Activated CD4-positive, alpha-beta memory T cell treated with anti-CD3 and anti-CD28 coated beads for 36 hours (primary cell): ENCODE measurements at regions of chr17 and their contacts with region 1.

Region 1: DNA sequence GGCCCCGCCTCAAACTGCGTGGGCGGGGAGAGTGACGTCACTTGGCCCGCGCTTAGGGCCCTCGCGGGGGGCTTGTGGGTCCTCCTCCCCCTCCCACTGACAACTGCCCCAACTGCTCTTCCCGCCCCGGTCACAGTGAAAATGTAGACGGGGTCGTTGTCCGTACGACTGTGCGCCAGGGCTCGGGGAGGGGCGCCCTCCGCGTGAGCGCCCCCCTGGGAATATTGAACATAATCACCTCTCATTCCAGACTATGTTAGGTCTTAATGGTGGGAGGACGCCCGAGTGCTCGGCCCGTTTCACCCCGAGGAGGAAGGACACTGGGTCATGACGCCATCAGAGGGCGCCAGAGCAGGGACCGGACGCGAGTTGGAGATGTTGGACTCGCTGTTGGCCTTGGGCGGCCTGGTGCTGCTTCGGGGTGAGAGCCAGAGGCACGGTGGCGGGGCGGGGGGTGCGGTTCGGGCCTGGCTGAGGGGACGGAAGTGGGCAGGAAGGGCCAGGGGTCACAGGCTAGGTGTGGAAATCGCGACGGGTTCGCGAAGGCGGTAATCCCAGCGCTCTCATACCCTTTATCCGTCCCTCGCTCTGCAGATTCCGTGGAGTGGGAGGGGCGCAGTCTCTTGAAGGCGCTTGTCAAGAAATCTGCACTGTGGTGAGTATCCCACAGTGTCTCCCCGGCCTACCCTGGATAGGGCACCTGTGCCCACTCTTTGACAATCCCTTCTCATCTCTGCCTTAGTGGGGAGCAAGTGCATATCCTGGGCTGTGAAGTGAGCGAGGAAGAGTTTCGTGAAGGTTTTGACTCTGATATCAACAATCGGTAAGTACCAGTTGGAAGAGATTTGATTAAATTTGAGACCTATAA is at the start of gene ELP5:
- DNase-seq: peak; percentile 94
- H3K4me3 Mint-ChIP-seq: peak within 1 kb of the TSS; percentile 96
- H3K27ac Mint-ChIP-seq: peak within 1 kb of the TSS; percentile 100
- H3K4me1 Mint-ChIP-seq: peaks cover 40% of the 10 kb centered on the region
- H3K27me3 Mint-ChIP-seq: no peaks in the 10 kb centered on the region
- total RNA-seq, gene ELP5: 49.6 to 52.4 TPM

Region 2: DNA sequence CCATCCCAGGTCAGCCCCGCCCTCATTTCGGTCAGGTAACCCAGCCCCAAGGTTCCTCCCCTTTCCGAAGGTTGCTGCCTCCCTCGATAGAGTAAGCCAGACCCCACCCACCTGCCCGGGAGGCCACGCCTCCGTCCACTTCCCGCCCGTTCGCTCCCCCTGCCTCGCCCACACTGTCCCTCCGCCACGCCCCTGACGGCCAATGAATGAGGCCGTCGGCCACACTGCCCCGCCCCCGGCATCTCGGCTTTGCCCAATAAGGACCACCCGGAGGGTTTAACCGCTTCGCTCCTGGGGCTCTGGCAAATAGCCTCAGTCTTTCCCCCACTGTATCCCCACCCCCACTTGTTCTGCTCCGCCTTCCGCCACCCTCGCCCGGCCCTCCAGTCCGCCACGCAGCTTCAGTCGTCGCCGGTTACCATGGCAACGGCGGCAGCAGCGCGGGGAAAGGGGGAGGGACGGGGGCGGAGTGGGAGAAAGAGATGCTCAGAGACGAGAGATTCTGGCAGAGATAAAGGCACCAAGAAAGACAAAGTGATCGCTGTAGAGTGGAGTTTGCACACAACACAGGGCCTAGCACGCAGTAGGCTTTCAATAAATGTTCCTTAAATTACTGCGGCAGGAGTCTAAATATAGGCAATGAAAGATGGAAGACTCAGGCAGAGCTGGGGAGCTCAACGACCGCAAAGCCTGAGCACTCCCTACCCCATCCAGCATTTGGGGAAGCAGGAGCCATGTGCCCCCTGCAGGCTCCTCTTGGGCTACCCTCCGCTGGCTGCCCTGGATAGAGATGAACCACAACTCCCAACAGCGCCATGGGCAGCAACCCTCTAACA is 37.9 kb before region 1 on chr17:
- CTCF ChIA-PET with region 1: no interaction called
- POLR2A ChIA-PET with region 1: no interaction called
- intact Hi-C with region 1: loop called (anchors 1 kb)
- DNase-seq: peak; percentile 100
- H3K4me3 Mint-ChIP-seq: peak overlapping the region; percentile 85
- H3K27ac Mint-ChIP-seq: peak overlapping the region; percentile 89
- H3K4me1 Mint-ChIP-seq: peaks cover 52% of the 10 kb centered on the region
- H3K27me3 Mint-ChIP-seq: peaks cover 7% of the 10 kb centered on the region

Region 3: GRCh38 chr17:7239091-7240027 is 13.1 kb before region 1 on chr17 and contains the start of gene PHF23:
- CTCF ChIA-PET with region 1: interaction called, 8 read pairs
- POLR2A ChIA-PET with region 1: interaction called, 7 read pairs
- intact Hi-C with region 1: loop called (anchors 1 kb)
- DNase-seq: peak; percentile 99
- H3K4me3 Mint-ChIP-seq: peak within 1 kb of the TSS; percentile 94
- H3K27ac Mint-ChIP-seq: peak within 1 kb of the TSS; percentile 97
- H3K4me1 Mint-ChIP-seq: peaks cover 59% of the 10 kb centered on the region
- H3K27me3 Mint-ChIP-seq: peaks cover 4% of the 10 kb centered on the region
- total RNA-seq, gene PHF23: 24.0 to 28.7 TPM

Region 4: DNA sequence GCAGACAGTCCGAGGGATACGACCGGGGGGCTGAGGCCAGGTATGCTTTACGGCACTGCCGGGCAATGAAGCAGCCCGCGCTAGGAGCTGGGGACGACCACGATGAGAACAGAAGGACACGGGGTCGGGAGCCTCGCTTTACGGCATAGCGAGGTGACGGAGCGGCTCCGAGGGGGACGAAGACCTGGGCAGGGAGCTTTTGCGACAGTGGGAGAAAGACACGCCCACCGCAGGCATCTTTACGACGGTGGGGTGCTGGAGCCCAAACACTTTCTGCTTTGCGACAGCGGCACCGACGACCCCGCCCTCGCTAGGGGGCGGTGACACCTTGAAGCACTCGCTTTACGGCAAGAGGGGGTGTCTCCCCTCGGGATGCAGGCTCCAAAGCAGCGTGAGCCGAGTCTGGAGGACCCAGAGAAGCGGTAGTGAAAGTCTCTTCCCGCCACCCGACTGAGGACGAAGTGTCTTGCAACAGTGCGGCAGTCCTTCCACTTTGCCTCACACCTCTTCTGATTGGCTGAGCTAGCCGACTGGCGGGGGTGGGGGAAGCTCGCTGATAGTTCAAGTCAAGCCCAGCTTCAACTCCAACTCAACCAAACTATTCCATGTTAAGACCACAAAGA is 77.1 kb after region 1 on chr17:
- CTCF ChIA-PET with region 1: no interaction called
- POLR2A ChIA-PET with region 1: no interaction called
- intact Hi-C with region 1: loop called (anchors 1 kb)
- DNase-seq: peak; percentile 98
- H3K4me3 Mint-ChIP-seq: peak overlapping the region; percentile 89
- H3K27ac Mint-ChIP-seq: peak overlapping the region; percentile 94
- H3K4me1 Mint-ChIP-seq: peaks cover 41% of the 10 kb centered on the region
- H3K27me3 Mint-ChIP-seq: no peaks in the 10 kb centered on the region

Region 5: GRCh38 chr17:7351665-7352501 is 99.5 kb after region 1 on chr17 and contains the start of gene KCTD11:
- CTCF ChIA-PET with region 1: no interaction called
- POLR2A ChIA-PET with region 1: no interaction called
- intact Hi-C with region 1: no loop called
- DNase-seq: peak; percentile 87
- H3K4me3 Mint-ChIP-seq: peak within 1 kb of the TSS; percentile 74
- H3K27ac Mint-ChIP-seq: peak within 1 kb of the TSS; percentile 68
- H3K4me1 Mint-ChIP-seq: peaks cover 39% of the 10 kb centered on the region
- H3K27me3 Mint-ChIP-seq: no peaks in the 10 kb centered on the region
- total RNA-seq, gene KCTD11: 2.6 to 2.8 TPM

Region 6: GRCh38 chr17:7403977-7404736 is 151.7 kb after region 1 on chr17 and contains the start of gene TMEM256:
- CTCF ChIA-PET with region 1: no interaction called
- POLR2A ChIA-PET with region 1: no interaction called
- intact Hi-C with region 1: no loop called
- DNase-seq: peak; percentile 99
- H3K4me3 Mint-ChIP-seq: peak within 1 kb of the TSS; percentile 97
- H3K27ac Mint-ChIP-seq: peak within 1 kb of the TSS; percentile 92
- H3K4me1 Mint-ChIP-seq: peaks cover 25% of the 10 kb centered on the region
- H3K27me3 Mint-ChIP-seq: no peaks in the 10 kb centered on the region
- total RNA-seq, gene TMEM256: 87.0 to 88.5 TPM

Region 7: GRCh38 chr17:7454980-7455379 is 202.6 kb after region 1 on chr17:
- CTCF ChIA-PET with region 1: no interaction called
- POLR2A ChIA-PET with region 1: interaction called, 3 read pairs
- intact Hi-C with region 1: loop called (anchors 5 kb)
- DNase-seq: no peak
- H3K4me3 Mint-ChIP-seq: peak overlapping the region; percentile 93
- H3K27ac Mint-ChIP-seq: peak overlapping the region; percentile 96
- H3K4me1 Mint-ChIP-seq: peaks cover 13% of the 10 kb centered on the region
- H3K27me3 Mint-ChIP-seq: no peaks in the 10 kb centered on the region

Region 8: DNA sequence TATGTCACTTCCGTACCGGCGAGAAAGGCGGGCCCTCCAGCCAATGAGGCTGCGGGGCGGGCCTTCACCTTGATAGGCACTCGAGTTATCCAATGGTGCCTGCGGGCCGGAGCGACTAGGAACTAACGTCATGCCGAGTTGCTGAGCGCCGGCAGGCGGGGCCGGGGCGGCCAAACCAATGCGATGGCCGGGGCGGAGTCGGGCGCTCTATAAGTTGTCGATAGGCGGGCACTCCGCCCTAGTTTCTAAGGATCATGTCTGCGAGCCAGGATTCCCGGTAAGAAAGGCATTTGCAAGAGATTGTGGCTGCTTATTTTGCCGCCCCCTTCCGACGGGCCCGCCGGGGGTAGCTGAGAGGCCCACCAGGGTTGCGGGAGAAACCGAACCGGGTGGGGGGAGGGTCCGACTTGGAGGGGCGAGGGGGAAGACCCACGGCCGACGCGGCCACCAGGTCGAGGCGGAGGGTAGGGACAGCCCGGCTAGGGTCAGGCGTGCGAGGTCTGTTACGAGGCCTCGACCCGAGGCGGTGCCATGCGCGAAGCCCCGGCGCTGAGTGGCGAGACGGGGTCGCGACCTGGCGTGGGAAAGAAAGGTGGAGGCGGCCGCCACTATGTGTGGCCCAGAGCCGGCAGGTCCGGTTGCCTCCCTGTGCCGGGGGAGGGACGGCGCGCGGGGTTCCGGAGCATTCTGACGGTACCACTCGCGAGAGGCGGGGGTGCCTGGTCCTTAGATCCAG is 320.3 kb after region 1 on chr17:
- CTCF ChIA-PET with region 1: no interaction called
- POLR2A ChIA-PET with region 1: no interaction called
- intact Hi-C with region 1: loop called (anchors 2 kb)
- DNase-seq: peak; percentile 100
- H3K4me3 Mint-ChIP-seq: peak overlapping the region; percentile 99
- H3K27ac Mint-ChIP-seq: peak overlapping the region; percentile 100
- H3K4me1 Mint-ChIP-seq: peaks cover 50% of the 10 kb centered on the region
- H3K27me3 Mint-ChIP-seq: peaks cover 2% of the 10 kb centered on the region